Right cardiac atrium (tissue), 5 donors: ENCODE measurements at regions of chr6 and their contacts with region 1.

Region 1: DNA sequence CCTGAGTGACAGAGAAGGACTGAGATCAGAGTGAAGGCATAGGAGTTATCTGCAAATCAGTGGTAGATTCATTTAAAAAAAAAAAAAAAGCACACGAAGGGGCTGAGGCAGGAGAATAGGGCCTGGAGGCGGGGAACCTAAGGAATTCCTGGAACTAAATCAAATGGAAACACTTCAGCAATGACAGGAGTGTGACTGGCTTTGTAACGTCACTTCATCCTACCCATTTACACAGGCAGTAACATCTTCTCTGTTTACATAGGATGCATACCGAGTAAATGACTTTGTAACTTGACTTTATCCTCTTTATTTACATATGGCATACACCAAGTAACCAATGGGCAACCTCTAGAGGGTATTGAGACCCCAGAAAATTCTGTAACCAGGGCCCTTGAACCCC is 56.5 kb upstream of the IYD start:
- DNase-seq: no peak
- ATAC-seq: no peak
- H3K4me3 ChIP-seq: no peak overlapping the region
- H3K27ac ChIP-seq: no peak overlapping the region
- H3K4me1 ChIP-seq: no peaks in the 10 kb centered on the region
- H3K27me3 ChIP-seq: no peaks in the 10 kb centered on the region

Region 2: DNA sequence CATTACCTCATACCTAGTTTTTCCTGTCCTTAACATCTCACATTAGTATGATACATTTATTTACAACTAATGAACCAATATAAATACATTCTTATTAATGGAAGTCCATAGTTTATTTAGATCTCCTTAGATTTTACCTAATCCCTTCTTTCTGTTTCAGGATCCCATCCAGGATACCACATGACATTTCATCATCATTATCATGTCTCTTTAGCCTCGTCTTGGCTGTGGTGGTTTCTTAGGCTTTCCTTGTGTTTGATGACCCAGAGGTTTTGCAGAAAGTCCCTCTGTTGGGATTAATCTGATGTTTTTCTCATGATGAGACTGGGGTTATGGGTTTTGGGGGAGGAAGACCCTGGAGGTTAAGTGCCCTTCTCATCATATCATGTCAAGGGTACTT is 32.8 kb before region 1 on chr6:
- intact Hi-C with region 1: loop called in 1 of 4 experiments (anchors 2 kb)
- DNase-seq: no peak
- ATAC-seq: no peak
- H3K4me3 ChIP-seq: no peak overlapping the region
- H3K27ac ChIP-seq: no peak overlapping the region
- H3K4me1 ChIP-seq: peaks cover 3% of the 10 kb centered on the region
- H3K27me3 ChIP-seq: no peaks in the 10 kb centered on the region

Region 3: GRCh38 chr6:150659046-150659763 is 346.8 kb after region 1 on chr6:
- intact Hi-C with region 1: no loop called
- DNase-seq: no peak
- ATAC-seq: no peak
- H3K4me3 ChIP-seq: no peak overlapping the region
- H3K27ac ChIP-seq: no peak overlapping the region
- H3K4me1 ChIP-seq: no peaks in the 10 kb centered on the region
- H3K27me3 ChIP-seq: no peaks in the 10 kb centered on the region